HEK293T (cell line): ENCODE measurements at regions of chr1 and their contacts with region 1.

Region 1: DNA sequence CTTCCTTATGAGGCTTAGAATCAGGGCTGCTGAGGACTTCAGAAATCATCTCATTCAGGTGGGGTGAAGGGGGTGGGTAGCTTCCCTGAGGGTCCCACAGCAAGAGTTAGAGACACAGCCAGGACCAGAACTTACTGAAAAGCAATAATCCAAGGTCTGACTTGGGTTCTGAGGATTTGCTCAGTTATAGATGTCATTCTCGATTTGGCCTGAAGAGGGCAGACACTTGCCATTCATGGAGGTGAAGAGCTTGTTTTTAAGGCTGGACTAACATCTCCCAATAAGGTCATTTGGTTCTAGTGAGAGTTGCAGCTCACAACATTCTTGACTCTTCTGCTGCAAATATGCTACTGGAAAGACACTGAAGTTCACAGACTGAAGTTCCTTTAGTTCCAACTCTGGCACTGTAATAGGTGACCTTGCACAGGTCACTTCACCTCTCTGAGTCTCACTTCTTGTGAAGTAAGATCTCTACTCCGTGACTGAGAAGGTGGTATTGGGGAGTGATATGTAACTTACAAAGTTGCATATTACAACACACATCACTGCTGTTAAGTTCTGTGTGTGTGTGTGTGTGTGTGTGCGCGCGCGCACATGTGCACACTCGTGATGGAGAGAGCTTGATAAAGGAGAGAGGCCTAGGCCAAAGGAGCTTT is 69.8 kb upstream of the DIRAS3 start:
- DNase-seq: peak; percentile 77

Region 2: GRCh38 chr1:68321084-68321685 is 200.9 kb after region 1 on chr1:
- CTCF ChIA-PET with region 1: interaction called, 12 read pairs
- POLR2A ChIA-PET with region 1: no interaction called
- DNase-seq: peak; percentile 80

Region 3: DNA sequence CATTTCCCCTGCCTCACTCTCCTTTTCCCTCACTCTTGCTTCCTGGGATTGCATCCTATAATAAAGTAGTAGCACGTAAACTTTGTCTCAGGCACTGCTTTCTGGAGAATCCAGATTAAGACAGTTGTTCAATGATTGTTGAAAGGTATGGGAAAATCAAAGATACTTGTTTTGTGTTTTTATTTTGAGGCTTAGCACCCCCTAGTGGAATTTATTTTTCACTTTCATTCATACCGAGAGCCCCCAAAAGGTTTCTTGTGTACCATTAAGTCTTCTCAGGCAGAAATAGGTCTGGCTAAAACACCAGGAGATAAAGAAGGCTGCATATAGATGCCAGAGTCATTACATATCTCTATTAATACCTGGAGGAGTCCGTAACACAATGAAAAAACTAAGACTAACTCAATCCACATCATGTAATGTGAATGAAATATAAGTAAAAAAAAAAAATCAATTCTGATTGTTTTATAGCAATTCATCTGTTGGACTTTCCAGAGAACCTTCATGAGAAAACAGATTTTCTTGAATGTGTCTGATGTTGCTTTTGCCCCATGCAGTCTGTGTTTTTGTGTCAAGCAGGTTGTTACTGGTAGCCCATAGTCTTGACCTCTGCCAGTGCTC is 226.0 kb after region 1 on chr1:
- CTCF ChIA-PET with region 1: interaction called, 32 read pairs
- POLR2A ChIA-PET with region 1: no interaction called
- DNase-seq: peak; percentile 37